ENCODE measurements at regions of chr6 and their contacts with region 1.

Region 1: GRCh38 chr6:158819213-158819909 is at the start of gene EZR:
- DNase-seq: peak; percentile 78 to 80
- H3K4me3 ChIP-seq: peak within 1 kb of the TSS; percentile 85 to 93 (median 92)
- H3K27ac ChIP-seq: peak within 1 kb of the TSS; percentile 99
- H3K4me1 ChIP-seq: no peaks in the 10 kb centered on the region
- H3K27me3 ChIP-seq: no peaks in the 10 kb centered on the region
- CTCF ChIP-seq: no peak
- POLR2A ChIP-seq: no peak
- total RNA-seq, gene EZR: 29.1 to 154 (median 59.3) TPM

Region 2: DNA sequence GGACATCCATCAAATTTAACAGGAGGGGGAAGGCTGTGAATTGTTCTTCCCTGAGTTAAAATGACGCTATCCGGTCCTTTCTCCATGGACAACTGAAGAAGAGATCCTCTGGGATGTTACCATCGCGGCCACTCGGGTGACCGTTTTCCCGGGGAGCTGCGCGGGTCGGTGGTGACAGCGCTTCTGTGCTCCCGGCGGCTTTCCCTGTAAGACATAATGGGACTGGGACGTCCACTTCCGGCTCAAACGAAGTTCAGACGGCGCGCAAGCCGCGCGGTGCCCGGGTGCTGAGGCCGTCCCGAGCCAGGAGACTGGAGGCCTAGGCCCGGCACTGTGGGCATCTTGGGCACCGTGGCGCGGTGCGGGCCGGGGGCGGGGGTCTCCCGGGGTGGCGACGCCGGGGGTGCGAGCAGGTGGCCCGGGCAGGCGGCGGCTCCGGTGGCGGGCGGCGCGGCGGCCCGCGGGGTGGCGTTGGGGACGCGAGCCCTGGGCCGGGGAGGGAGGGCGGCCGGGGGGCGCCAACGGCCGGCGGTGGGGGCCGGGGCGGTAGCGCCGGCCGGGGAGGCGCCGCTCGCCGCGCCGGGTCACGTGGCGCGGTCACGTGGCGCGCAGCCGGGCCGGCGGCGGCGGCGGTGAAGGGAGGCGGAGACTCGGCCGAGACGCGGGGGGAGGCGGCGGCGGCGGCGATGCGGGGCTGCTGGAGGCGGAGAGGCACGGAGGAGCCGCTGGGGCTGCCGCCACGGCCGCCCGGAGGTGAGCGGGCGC is 587.6 kb before region 1 on chr6:
- intact Hi-C with region 1: loop called (anchors 2 kb)
- DNase-seq: peak; percentile 41 to 71
- H3K4me3 ChIP-seq: peak overlapping the region; percentile 70 to 88 (median 84)
- H3K27ac ChIP-seq: peak overlapping the region; percentile 88 to 99
- H3K4me1 ChIP-seq: peaks cover 0 to 4% of the 10 kb centered on the region in 2 donors
- H3K27me3 ChIP-seq: no peaks in the 10 kb centered on the region
- CTCF ChIP-seq: no peak
- POLR2A ChIP-seq: no peak

Region 3: GRCh38 chr6:158686791-158687381 is 132.5 kb before region 1 on chr6:
- intact Hi-C with region 1: no loop called
- DNase-seq: no peak
- H3K4me3 ChIP-seq: no peak overlapping the region
- H3K27ac ChIP-seq: peak overlapping the region in 1 of 2 donors; percentile 54
- H3K4me1 ChIP-seq: no peaks in the 10 kb centered on the region
- H3K27me3 ChIP-seq: no peaks in the 10 kb centered on the region
- CTCF ChIP-seq: no peak
- POLR2A ChIP-seq: no peak